Astrocyte of the cerebellum (primary cell): ENCODE measurements at regions of chr4 and their contacts with region 1.

Region 1: GRCh38 chr4:42442601-42443000 is 45.3 kb downstream of the SHISA3 start:
- DNase-seq: no peak
- H3K4me3 ChIP-seq: no peak overlapping the region
- CTCF ChIP-seq: no peak

Region 2: GRCh38 chr4:42385516-42385915 is 57.1 kb before region 1 on chr4:
- in situ Hi-C with region 1: no loop called
- DNase-seq: no peak
- H3K4me3 ChIP-seq: no peak overlapping the region
- CTCF ChIP-seq: no peak

Region 3: GRCh38 chr4:42396752-42397634 is 45.6 kb before region 1 on chr4 and contains the start of gene SHISA3:
- in situ Hi-C with region 1: no loop called
- DNase-seq: no peak
- H3K4me3 ChIP-seq: peak within 1 kb of the TSS; percentile 48
- CTCF ChIP-seq: no peak

Region 4: DNA sequence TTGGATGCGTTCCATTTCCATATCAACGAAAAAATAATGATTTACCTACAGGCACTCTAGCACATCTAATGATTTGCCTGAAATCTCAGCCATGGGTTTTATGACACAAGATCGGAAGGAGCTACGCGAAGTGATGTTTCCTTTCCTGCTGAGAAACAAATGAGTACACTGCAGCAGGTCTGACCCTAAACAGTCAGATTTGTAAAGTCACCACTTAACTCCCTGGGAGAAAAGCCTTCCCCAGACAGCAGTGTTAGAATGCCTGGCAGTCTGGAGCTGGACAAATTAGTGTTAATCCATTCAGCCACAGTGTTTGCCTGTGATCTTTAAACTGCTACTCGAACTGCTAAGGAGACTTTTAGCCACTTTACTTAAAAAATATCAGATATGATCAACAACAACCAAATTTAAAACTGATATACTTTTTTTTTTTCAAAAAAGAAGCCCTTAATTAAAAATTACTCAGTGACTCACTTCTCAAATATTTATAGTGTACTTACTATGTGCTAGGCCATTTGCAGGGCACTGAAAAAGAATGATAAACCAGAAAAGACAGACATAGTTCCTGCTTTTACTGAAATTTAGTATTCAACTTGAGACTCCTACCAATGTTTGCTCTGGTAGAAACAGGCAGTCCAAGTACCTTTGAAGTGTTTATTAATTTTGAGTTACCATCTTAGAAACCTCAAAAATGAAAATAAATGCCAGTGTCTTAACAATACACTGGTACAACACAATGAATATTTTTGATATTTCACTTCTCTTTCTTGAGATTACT is 59.2 kb after region 1 on chr4:
- in situ Hi-C with region 1: loop called (anchors 5 kb)
- DNase-seq: no peak
- H3K4me3 ChIP-seq: no peak overlapping the region
- CTCF ChIP-seq: no peak